CD8-positive, alpha-beta memory T cell (primary cell): ENCODE measurements at regions of chr18 and their contacts with region 1.

Region 1: DNA sequence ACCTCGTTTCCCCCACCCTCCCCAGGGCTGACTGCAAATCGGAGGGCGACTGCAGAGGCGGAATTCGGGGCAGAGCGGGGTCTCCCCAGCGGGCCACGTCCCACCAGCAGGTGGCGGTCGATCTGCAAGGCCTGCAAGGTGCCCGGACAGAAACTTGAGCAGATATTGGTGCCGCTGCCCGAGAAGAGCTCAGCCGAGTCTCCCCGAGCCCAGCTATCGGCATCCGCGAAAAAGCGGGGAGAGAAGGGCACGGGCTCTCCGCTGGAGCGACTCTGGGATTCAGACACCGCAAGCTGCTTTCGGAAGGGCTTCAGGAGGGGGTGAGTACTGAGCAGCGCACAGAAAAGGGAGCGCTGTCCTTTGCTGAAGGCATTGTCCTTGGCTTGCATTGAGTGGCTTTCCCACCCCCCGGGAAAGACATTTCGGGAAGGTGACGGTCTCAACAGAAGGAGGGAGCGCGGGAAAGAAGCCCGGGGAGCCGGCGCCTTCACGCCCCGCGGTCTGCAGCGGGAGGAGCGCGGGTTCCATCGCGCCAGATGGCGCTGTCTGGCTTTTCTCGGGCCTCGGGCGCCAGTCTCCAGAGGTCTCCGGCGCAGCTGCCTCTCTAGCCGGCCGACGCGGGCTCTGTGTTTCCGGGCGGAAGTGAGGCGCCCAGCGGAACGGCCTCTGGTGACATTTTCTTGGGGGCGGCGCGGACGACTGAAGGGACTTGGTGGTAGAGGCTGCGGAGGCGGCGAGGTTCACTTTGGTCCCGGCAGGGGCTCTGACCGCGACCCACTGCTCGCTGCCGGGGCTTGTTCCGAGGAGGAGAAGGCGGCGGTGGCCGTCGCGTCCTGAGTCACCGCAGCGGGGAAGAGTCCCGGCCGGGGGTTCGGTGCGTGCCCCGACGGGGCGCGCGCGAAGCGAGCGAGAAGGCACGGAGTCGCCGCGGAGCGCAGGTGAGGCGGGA is 69.5 kb downstream of the HAUS1 start:
- DNase-seq: peak; percentile 88 to 95 (median 90)
- H3K4me3 ChIP-seq: peak overlapping the region; percentile 96
- H3K4me3 Mint-ChIP-seq: peak overlapping the region; percentile 96 to 100 (median 99)
- H3K27ac ChIP-seq: peak overlapping the region; percentile 69
- H3K27ac Mint-ChIP-seq: peak overlapping the region; percentile 96 to 100 (median 97)
- H3K4me1 ChIP-seq: peaks cover 37% of the 10 kb centered on the region
- H3K4me1 Mint-ChIP-seq: peaks cover 30 to 44% (median 39%) of the 10 kb centered on the region in 3 donors
- H3K27me3 ChIP-seq: no peaks in the 10 kb centered on the region
- H3K27me3 Mint-ChIP-seq: peaks cover 0 to 4% of the 10 kb centered on the region in 2 donors

Region 2: GRCh38 chr18:46141199-46141598 is 32.5 kb before region 1 on chr18:
- CTCF ChIA-PET with region 1: interaction called, 29 read pairs
- POLR2A ChIA-PET with region 1: no interaction called
- DNase-seq: no peak
- H3K4me3 ChIP-seq: no peak overlapping the region
- H3K4me3 Mint-ChIP-seq: no peak overlapping the region
- H3K27ac ChIP-seq: no peak overlapping the region
- H3K27ac Mint-ChIP-seq: no peak overlapping the region
- H3K4me1 ChIP-seq: no peaks in the 10 kb centered on the region
- H3K4me1 Mint-ChIP-seq: no peaks in the 10 kb centered on the region
- H3K27me3 ChIP-seq: no peaks in the 10 kb centered on the region
- H3K27me3 Mint-ChIP-seq: no peaks in the 10 kb centered on the region

Region 3: DNA sequence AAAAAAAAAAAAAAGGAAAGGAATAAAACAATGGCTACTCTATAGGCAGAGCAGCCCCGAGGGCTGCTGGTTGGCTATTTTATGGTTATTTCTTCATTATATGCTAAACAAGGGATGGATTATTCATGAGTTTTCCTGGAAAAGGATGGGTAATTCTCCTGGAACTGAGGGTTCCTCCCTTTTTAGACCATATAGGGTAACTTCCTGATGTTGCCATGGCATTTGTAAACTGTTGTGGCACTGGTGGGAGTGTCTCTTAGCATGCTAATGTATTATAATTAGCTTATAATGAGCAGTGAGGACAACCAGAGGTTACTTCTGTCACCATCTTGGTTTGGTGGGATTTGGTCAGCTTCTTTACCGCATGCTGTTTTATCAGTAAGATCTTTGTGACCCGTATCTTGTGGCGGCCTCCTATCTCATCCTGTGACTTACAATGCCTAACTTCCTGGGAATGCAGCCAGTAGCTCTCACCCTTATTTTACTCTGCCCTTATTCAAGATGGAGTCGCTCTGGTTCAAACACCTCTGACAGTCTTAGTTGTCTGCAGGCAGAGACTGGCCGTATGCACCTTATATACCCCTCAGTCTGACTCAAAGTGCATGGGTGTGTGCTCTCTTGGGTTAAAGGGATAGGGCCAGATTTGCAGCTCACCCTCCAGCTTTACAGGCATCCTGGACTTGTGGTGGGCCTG is 11.8 kb before region 1 on chr18:
- CTCF ChIA-PET with region 1: interaction called, 41 read pairs
- POLR2A ChIA-PET with region 1: interaction called, 3 read pairs
- DNase-seq: no peak
- H3K4me3 ChIP-seq: no peak overlapping the region
- H3K4me3 Mint-ChIP-seq: peak overlapping the region in 1 of 7 donors; percentile 40
- H3K27ac ChIP-seq: no peak overlapping the region
- H3K27ac Mint-ChIP-seq: no peak overlapping the region
- H3K4me1 ChIP-seq: peaks cover 35% of the 10 kb centered on the region
- H3K4me1 Mint-ChIP-seq: peaks cover 23 to 42% (median 34%) of the 10 kb centered on the region in 3 donors
- H3K27me3 ChIP-seq: no peaks in the 10 kb centered on the region
- H3K27me3 Mint-ChIP-seq: no peaks in the 10 kb centered on the region

Region 4: DNA sequence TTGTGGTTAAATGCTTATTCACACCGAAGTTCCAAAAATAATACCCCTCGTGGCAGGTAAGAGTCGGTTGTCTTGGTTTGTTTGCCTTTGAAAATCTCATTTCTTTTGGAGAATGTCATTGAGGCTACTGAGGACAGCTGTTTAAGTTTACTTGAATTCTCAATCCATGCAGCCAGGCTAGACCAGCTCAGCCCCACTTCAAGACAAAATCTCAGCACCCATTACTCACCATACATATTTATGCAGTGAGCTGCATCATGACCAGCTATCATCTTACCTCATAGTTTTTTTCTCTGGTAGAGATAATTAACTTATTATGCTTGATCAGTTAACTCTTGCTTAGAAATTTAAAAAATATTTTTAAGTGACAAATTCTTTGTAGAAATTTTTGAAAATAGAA is 46.4 kb after region 1 on chr18:
- CTCF ChIA-PET with region 1: interaction called, 15 read pairs
- POLR2A ChIA-PET with region 1: no interaction called
- DNase-seq: no peak
- H3K4me3 ChIP-seq: no peak overlapping the region
- H3K4me3 Mint-ChIP-seq: no peak overlapping the region
- H3K27ac ChIP-seq: no peak overlapping the region
- H3K27ac Mint-ChIP-seq: no peak overlapping the region
- H3K4me1 ChIP-seq: peaks cover 36% of the 10 kb centered on the region
- H3K4me1 Mint-ChIP-seq: peaks cover 75 to 92% (median 87%) of the 10 kb centered on the region in 3 donors
- H3K27me3 ChIP-seq: no peaks in the 10 kb centered on the region
- H3K27me3 Mint-ChIP-seq: no peaks in the 10 kb centered on the region

Region 5: GRCh38 chr18:46281185-46282176 is 107.8 kb after region 1 on chr18:
- CTCF ChIA-PET with region 1: interaction called, 15 read pairs
- POLR2A ChIA-PET with region 1: no interaction called
- DNase-seq: peak; percentile 18 to 61 (median 27)
- H3K4me3 ChIP-seq: no peak overlapping the region
- H3K4me3 Mint-ChIP-seq: no peak overlapping the region
- H3K27ac ChIP-seq: no peak overlapping the region
- H3K27ac Mint-ChIP-seq: no peak overlapping the region
- H3K4me1 ChIP-seq: no peaks in the 10 kb centered on the region
- H3K4me1 Mint-ChIP-seq: peaks cover 7 to 15% (median 10%) of the 10 kb centered on the region in 3 donors
- H3K27me3 ChIP-seq: no peaks in the 10 kb centered on the region
- H3K27me3 Mint-ChIP-seq: no peaks in the 10 kb centered on the region

Region 6: GRCh38 chr18:46378126-46378863 is 204.6 kb after region 1 on chr18:
- CTCF ChIA-PET with region 1: no interaction called
- POLR2A ChIA-PET with region 1: no interaction called
- DNase-seq: no peak
- H3K4me3 ChIP-seq: no peak overlapping the region
- H3K4me3 Mint-ChIP-seq: no peak overlapping the region
- H3K27ac ChIP-seq: no peak overlapping the region
- H3K27ac Mint-ChIP-seq: no peak overlapping the region
- H3K4me1 ChIP-seq: no peaks in the 10 kb centered on the region
- H3K4me1 Mint-ChIP-seq: no peaks in the 10 kb centered on the region
- H3K27me3 ChIP-seq: no peaks in the 10 kb centered on the region
- H3K27me3 Mint-ChIP-seq: peaks cover 9 to 11% of the 10 kb centered on the region in 2 donors

Region 7: DNA sequence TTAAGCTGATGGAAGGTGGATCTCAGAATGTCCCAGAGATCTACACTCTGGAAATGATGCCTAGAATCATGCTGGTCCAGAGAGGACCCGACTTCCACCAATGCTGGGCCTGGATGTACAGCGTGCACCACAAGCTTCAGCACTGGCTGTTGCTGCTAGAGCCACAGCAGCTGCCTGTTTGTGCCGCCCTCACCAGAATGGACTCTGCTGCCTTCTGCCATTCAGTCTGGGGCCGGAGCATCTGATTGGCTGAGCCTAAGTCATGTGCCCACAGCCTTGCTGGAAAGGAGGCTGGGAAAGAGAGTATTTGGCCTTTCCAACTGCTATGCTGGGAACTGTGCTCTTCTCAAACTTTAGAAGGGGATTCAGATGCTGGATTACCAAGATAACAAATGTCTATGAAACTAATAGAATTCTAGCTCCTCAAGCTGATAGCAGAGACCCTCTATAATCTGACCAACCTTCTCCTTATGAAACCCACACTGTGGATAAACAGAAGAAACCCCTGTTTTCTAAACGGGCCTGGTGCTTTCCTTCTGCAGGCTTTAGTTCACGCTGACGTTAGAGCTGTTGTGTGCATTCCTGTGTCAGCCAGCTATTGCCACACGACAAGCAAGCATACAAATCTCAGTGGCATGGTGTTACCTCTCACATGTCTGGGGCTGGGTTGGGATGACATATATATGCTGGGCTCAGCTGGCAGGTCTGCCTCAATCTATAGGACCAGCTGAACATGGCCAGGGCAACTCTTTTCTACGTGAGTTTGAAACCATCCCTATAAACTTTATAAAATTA is 487.5 kb after region 1 on chr18:
- CTCF ChIA-PET with region 1: interaction called, 88 read pairs
- POLR2A ChIA-PET with region 1: interaction called, 3 read pairs
- DNase-seq: no peak
- H3K4me3 ChIP-seq: no peak overlapping the region
- H3K4me3 Mint-ChIP-seq: no peak overlapping the region
- H3K27ac ChIP-seq: no peak overlapping the region
- H3K27ac Mint-ChIP-seq: no peak overlapping the region
- H3K4me1 ChIP-seq: peaks cover 4% of the 10 kb centered on the region
- H3K4me1 Mint-ChIP-seq: no peaks in the 10 kb centered on the region
- H3K27me3 ChIP-seq: no peaks in the 10 kb centered on the region
- H3K27me3 Mint-ChIP-seq: peaks cover 2 to 7% of the 10 kb centered on the region in 2 donors